Aorta (tissue), 5 donors: ENCODE measurements at regions of chr6 and their contacts with region 1.

Region 1: DNA sequence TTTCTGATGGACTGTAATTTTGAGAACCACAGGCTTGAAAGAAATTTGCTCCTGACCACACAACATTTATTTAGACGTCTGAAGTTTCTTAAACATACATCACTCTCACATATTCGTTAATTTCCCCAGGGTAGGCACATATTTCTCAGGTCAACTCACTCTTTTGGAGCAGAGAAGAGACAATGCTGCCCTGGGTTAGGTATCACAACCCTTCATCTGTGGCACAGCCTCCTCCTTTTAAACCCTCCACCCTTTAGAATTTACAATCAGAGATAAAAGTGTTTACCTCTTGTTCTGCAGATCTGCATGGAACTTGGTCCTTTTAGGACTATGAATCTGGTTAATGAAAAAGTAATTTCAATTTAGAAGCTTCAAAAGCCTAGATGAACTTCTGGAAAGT is 123.6 kb upstream of the HDDC2 start:
- DNase-seq: no peak
- ATAC-seq: no peak
- H3K4me3 ChIP-seq: no peak overlapping the region
- H3K27ac ChIP-seq: peak overlapping the region; percentile 40 to 57
- H3K4me1 ChIP-seq: peaks cover 5 to 12% of the 10 kb centered on the region in 2 donors
- H3K27me3 ChIP-seq: no peaks in the 10 kb centered on the region

Region 2: GRCh38 chr6:125340991-125341390 is 84.3 kb before region 1 on chr6:
- intact Hi-C with region 1: no loop called
- DNase-seq: no peak
- ATAC-seq: no peak
- H3K4me3 ChIP-seq: no peak overlapping the region
- H3K27ac ChIP-seq: no peak overlapping the region
- H3K4me1 ChIP-seq: peaks cover 0 to 4% of the 10 kb centered on the region in 2 donors
- H3K27me3 ChIP-seq: no peaks in the 10 kb centered on the region

Region 3: GRCh38 chr6:125363039-125363823 is 62.1 kb before region 1 on chr6:
- intact Hi-C with region 1: loop called in 1 of 2 experiments (anchors 5 kb)
- DNase-seq: peak; percentile 77 to 87
- ATAC-seq: peak; percentile 85
- H3K4me3 ChIP-seq: peak overlapping the region; percentile 28 to 44
- H3K27ac ChIP-seq: peak overlapping the region; percentile 37 to 88
- H3K4me1 ChIP-seq: peaks cover 3 to 8% of the 10 kb centered on the region in 2 donors
- H3K27me3 ChIP-seq: no peaks in the 10 kb centered on the region

Region 4: GRCh38 chr6:125393449-125393858 is 31.9 kb before region 1 on chr6:
- intact Hi-C with region 1: no loop called
- DNase-seq: no peak
- ATAC-seq: no peak
- H3K4me3 ChIP-seq: no peak overlapping the region
- H3K27ac ChIP-seq: no peak overlapping the region
- H3K4me1 ChIP-seq: peaks cover 0 to 2% of the 10 kb centered on the region in 2 donors
- H3K27me3 ChIP-seq: no peaks in the 10 kb centered on the region